Activated CD4-positive, alpha-beta T cell treated with anti-CD3 and anti-CD28 coated beads for 36 hours (primary cell): ENCODE measurements at regions of chr2 and their contacts with region 1.

Region 1: GRCh38 chr2:238370823-238371372 is 50.6 kb downstream of the TRAF3IP1 start:
- DNase-seq: peak; percentile 73
- ATAC-seq: peak; percentile 88
- H3K4me3 Mint-ChIP-seq: no peak overlapping the region
- H3K27ac Mint-ChIP-seq: no peak overlapping the region
- H3K4me1 Mint-ChIP-seq: peaks cover 6% of the 10 kb centered on the region
- H3K27me3 Mint-ChIP-seq: no peaks in the 10 kb centered on the region

Region 2: GRCh38 chr2:238339395-238340213 is 31.3 kb before region 1 on chr2:
- CTCF ChIA-PET with region 1: no interaction called
- POLR2A ChIA-PET with region 1: no interaction called
- intact Hi-C with region 1: loop called in 1 of 2 experiments (anchors 1 kb)
- DNase-seq: peak; percentile 16
- ATAC-seq: no peak
- H3K4me3 Mint-ChIP-seq: no peak overlapping the region
- H3K27ac Mint-ChIP-seq: no peak overlapping the region
- H3K4me1 Mint-ChIP-seq: peaks cover 2% of the 10 kb centered on the region
- H3K27me3 Mint-ChIP-seq: no peaks in the 10 kb centered on the region

Region 3: GRCh38 chr2:238462782-238463396 is 92.0 kb after region 1 on chr2:
- CTCF ChIA-PET with region 1: interaction called, 14 read pairs
- POLR2A ChIA-PET with region 1: no interaction called
- intact Hi-C with region 1: loop called (anchors 1 kb)
- DNase-seq: no peak
- ATAC-seq: peak; percentile 79
- H3K4me3 Mint-ChIP-seq: no peak overlapping the region
- H3K27ac Mint-ChIP-seq: no peak overlapping the region
- H3K4me1 Mint-ChIP-seq: no peaks in the 10 kb centered on the region
- H3K27me3 Mint-ChIP-seq: no peaks in the 10 kb centered on the region

Region 4: GRCh38 chr2:238615187-238615586 is 244.3 kb after region 1 on chr2:
- CTCF ChIA-PET with region 1: interaction called, 4 read pairs
- POLR2A ChIA-PET with region 1: no interaction called
- intact Hi-C with region 1: loop called in 1 of 2 experiments (anchors 10 kb)
- DNase-seq: no peak
- ATAC-seq: no peak
- H3K4me3 Mint-ChIP-seq: no peak overlapping the region
- H3K27ac Mint-ChIP-seq: no peak overlapping the region
- H3K4me1 Mint-ChIP-seq: no peaks in the 10 kb centered on the region
- H3K27me3 Mint-ChIP-seq: peaks cover 14% of the 10 kb centered on the region

Region 5: GRCh38 chr2:238784671-238785527 is 414.0 kb after region 1 on chr2:
- CTCF ChIA-PET with region 1: interaction called, 5 read pairs
- POLR2A ChIA-PET with region 1: interaction called, 8 read pairs
- intact Hi-C with region 1: loop called (anchors 2 kb)
- DNase-seq: peak; percentile 80
- ATAC-seq: peak; percentile 58
- H3K4me3 Mint-ChIP-seq: no peak overlapping the region
- H3K27ac Mint-ChIP-seq: no peak overlapping the region
- H3K4me1 Mint-ChIP-seq: peaks cover 2% of the 10 kb centered on the region
- H3K27me3 Mint-ChIP-seq: peaks cover 12% of the 10 kb centered on the region

Region 6: DNA sequence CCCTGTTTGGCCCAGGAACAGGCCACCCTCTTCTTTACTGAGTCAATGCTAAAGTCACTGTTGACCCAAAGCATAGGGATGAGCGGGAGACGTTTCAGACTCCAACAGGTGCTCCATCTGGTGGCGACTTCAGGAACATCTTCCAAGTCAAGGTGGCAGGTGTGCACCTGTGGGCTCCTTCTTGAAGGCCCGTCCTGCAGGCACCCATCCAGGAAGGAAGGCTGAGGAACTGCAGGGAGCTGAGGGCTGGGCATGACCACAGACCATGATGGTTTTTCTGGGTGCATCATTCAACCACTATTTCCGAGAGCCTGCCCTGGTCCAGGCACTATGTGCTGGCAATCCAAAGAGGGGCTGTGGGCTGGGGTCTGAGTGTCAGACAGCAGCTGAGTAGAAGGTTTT is 1511.4 kb after region 1 on chr2:
- CTCF ChIA-PET with region 1: no interaction called
- POLR2A ChIA-PET with region 1: no interaction called
- intact Hi-C with region 1: loop called in 1 of 2 experiments (anchors 1 kb)
- DNase-seq: peak; percentile 77
- ATAC-seq: peak; percentile 75
- H3K4me3 Mint-ChIP-seq: no peak overlapping the region
- H3K27ac Mint-ChIP-seq: no peak overlapping the region
- H3K4me1 Mint-ChIP-seq: peaks cover 4% of the 10 kb centered on the region
- H3K27me3 Mint-ChIP-seq: no peaks in the 10 kb centered on the region